Activated naive CD4-positive, alpha-beta T cell treated with anti-CD3 and anti-CD28 coated beads for 36 hours (primary cell): ENCODE measurements at regions of chr2 and their contacts with region 1.

Region 1: DNA sequence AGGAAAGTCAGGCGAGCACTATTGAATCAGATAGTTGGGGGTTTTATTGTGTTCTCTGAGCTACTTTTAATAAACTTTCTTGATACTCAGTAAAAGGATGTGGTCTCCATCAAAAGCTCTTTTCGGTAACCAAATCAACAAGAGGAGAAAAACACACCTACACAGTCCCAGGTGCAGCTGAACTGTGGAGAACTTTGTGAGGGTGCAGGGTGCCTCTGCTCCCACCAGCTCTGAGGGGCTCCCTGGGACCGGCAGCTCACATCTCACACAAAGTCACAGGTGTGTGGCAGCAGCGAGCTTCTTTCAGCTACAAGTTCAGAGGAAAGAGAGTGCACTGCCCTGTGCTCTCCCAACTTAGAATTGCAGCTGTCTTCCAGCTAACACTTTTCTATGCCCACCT is 650.4 kb downstream of the RNF144A start:
- DNase-seq: peak; percentile 82
- H3K4me3 Mint-ChIP-seq: peak overlapping the region; percentile 36
- H3K27ac Mint-ChIP-seq: peak overlapping the region; percentile 82
- H3K4me1 Mint-ChIP-seq: peaks cover 58% of the 10 kb centered on the region
- H3K27me3 Mint-ChIP-seq: no peaks in the 10 kb centered on the region

Region 2: GRCh38 chr2:7450188-7450832 is 117.3 kb before region 1 on chr2:
- CTCF ChIA-PET with region 1: no interaction called
- intact Hi-C with region 1: loop called (anchors 1 kb)
- DNase-seq: peak; percentile 75
- H3K4me3 Mint-ChIP-seq: peak overlapping the region; percentile 41
- H3K27ac Mint-ChIP-seq: peak overlapping the region; percentile 88
- H3K4me1 Mint-ChIP-seq: peaks cover 66% of the 10 kb centered on the region
- H3K27me3 Mint-ChIP-seq: no peaks in the 10 kb centered on the region

Region 3: GRCh38 chr2:7527165-7527722 is 40.4 kb before region 1 on chr2:
- CTCF ChIA-PET with region 1: no interaction called
- intact Hi-C with region 1: loop called (anchors 1 kb)
- DNase-seq: no peak
- H3K4me3 Mint-ChIP-seq: no peak overlapping the region
- H3K27ac Mint-ChIP-seq: no peak overlapping the region
- H3K4me1 Mint-ChIP-seq: peaks cover 46% of the 10 kb centered on the region
- H3K27me3 Mint-ChIP-seq: no peaks in the 10 kb centered on the region

Region 4: GRCh38 chr2:7672027-7672684 is 104.5 kb after region 1 on chr2:
- CTCF ChIA-PET with region 1: interaction called, 31 read pairs
- intact Hi-C with region 1: loop called (anchors 1 kb)
- DNase-seq: peak; percentile 80
- H3K4me3 Mint-ChIP-seq: peak overlapping the region; percentile 20
- H3K27ac Mint-ChIP-seq: peak overlapping the region; percentile 74
- H3K4me1 Mint-ChIP-seq: peaks cover 29% of the 10 kb centered on the region
- H3K27me3 Mint-ChIP-seq: no peaks in the 10 kb centered on the region

Region 5: GRCh38 chr2:7845332-7845731 is 277.7 kb after region 1 on chr2:
- CTCF ChIA-PET with region 1: no interaction called
- intact Hi-C with region 1: loop called (anchors 2 kb)
- DNase-seq: no peak
- H3K4me3 Mint-ChIP-seq: no peak overlapping the region
- H3K27ac Mint-ChIP-seq: no peak overlapping the region
- H3K4me1 Mint-ChIP-seq: peaks cover 19% of the 10 kb centered on the region
- H3K27me3 Mint-ChIP-seq: peaks cover 5% of the 10 kb centered on the region